Posterior cingulate gyrus (tissue), 11 donors: ENCODE measurements at regions of chr17 and their contacts with region 1.

Region 1: GRCh38 chr17:72539981-72540897 is 419.4 kb downstream of the SOX9 start:
- DNase-seq: peak; percentile 48 to 97 (median 83)

Region 2: GRCh38 chr17:70636517-70637133 is 1903.6 kb before region 1 on chr17:
- intact Hi-C with region 1: loop called (anchors 2 kb)
- DNase-seq: no peak

Region 3: GRCh38 chr17:70767102-70767701 is 1773.0 kb before region 1 on chr17:
- intact Hi-C with region 1: loop called (anchors 2 kb)
- DNase-seq: no peak

Region 4: DNA sequence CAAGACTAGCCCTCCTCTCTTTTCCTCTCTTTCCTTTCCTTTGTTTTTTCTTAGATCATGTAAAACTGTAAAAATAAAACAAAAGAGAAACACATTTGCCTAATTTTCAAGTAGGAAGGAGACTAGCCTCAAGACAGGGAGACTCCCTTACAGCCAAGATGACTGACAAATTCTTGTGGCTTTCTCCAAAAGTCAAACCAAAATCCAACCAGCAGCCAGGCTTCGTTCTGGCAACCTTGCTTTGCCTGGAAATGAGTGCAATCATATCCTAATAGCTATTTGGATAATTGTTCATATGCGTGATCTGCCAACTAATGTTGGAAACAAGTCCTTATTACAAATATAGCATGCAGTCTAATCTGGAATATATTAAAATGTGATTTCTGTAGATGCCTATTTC is 1288.3 kb before region 1 on chr17:
- intact Hi-C with region 1: loop called (anchors 10 kb)
- DNase-seq: no peak

Region 5: DNA sequence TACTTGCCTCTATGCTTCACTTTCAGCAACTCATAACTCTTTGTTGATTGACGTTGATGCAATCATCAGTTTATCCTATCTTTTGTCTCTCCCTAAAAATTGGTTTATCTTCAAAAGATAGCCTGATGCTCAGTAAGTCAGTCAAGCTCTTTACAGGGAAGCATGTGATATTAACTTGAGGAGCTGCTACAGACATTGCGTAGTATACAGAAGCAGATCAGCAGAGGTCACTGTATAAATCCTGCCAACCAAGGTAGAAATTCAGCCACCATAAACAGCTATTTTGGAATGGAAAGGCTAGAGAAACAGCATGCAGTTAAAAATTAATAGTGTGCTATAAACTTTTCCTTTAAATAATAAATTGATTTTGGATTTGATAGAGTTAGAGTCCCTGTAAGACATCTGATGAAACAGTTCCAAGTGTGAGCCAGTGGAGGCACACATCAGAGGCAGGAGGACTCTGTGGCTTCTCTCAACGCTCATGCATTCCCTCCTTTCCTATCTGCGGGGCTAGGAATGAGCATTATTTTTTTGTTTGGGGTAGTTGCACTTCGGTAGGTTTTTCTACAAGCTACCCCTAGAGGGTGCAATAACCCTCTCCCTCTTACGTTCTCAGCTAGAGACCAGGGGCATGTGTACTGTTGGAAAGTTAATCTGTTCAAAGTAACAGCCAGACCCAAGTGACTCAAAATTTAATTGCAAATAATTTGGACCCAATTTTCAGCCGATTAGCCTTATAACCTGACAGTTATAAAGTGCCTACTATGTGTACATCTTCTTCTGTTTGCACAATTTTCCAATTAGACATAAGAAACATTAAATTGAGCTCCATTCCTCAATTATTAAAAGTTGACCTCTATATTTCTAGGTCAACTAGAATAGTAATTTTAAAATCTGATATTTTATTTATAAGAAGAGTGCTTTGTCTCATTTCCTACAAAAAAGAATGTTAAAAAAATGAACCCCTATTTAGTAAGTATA is 1067.1 kb before region 1 on chr17:
- intact Hi-C with region 1: loop called (anchors 5 kb)
- DNase-seq: no peak

Region 6: DNA sequence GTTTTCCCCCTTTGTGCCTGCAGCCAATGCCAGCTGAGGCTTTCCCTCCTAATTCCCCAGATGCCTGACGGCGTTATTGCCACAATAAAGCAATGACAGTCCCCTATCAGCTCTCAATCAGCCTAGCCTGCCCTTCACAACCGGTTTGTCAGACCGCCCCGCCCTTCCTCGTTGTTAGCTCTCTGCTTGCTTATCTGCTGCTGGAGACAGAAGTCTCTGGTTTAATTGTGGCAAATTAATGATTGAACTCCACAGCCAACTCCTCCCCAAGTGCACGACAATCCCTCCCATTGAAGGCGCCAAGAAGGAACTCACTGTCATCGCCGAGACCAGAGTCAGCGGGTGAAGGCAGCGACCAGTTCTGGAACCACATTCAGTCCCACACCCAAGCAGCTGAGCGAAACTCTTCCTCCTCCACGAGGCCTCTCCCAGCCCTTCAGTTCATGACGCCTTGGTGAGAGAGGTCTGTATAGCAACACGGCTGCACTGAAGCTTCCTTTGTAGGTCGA is 77.8 kb after region 1 on chr17:
- intact Hi-C with region 1: no loop called
- DNase-seq: no peak